ENCODE measurements at regions of chr14 and their contacts with region 1.

Region 1: GRCh38 chr14:55654243-55654642 is 74.2 kb downstream of the KTN1 start:
- DNase-seq: no peak
- H3K4me3 Mint-ChIP-seq: no peak overlapping the region
- H3K27ac Mint-ChIP-seq: no peak overlapping the region
- H3K4me1 Mint-ChIP-seq: peaks cover 5% of the 10 kb centered on the region
- H3K27me3 Mint-ChIP-seq: no peaks in the 10 kb centered on the region

Region 2: GRCh38 chr14:55316567-55316966 is 337.7 kb before region 1 on chr14:
- intact Hi-C with region 1: no loop called
- DNase-seq: no peak
- H3K4me3 Mint-ChIP-seq: no peak overlapping the region
- H3K27ac Mint-ChIP-seq: no peak overlapping the region
- H3K4me1 Mint-ChIP-seq: peaks cover 7% of the 10 kb centered on the region
- H3K27me3 Mint-ChIP-seq: no peaks in the 10 kb centered on the region

Region 3: GRCh38 chr14:55446218-55446654 is 208.0 kb before region 1 on chr14:
- intact Hi-C with region 1: loop called (anchors 10 kb)
- DNase-seq: peak; percentile 28
- H3K4me3 Mint-ChIP-seq: no peak overlapping the region
- H3K27ac Mint-ChIP-seq: no peak overlapping the region
- H3K4me1 Mint-ChIP-seq: peaks cover 18% of the 10 kb centered on the region
- H3K27me3 Mint-ChIP-seq: no peaks in the 10 kb centered on the region

Measured in activated T-helper 1 cell treated with anti-CD3 and anti-CD28 coated beads, Interleukin-12 subunit alpha, Interleukin-12 subunit beta, Interleukin-2, Interleukin-4 antibody, amounts not matched to agents 30 ng/mL and 10 ng/mL and 1 ng/mL, durations not matched to agents 14 hours and 24 hours and 36 hours (primary cell).